PC-3 (cell line): ENCODE measurements at regions of chr10 and their contacts with region 1.

Region 1: DNA sequence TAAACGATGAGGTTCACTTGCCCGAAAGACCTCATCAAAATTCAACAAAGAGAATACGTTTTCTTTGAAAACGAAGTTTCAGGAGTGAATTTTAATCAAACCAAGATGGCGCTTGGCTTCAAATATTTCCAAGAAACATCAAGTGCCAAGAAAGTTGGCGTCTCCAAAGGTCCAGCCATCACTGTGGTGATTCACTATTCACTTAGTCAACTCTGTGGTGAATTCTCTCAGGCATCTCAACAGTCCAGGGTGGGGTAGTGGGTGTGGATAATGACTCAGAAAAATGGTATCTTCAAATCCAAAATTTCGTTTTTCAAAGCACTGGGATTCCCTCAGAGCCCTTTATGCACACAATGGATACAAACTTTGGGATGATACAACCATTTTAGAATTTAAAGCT is 133.1 kb downstream of the SVIL start:
- DNase-seq: peak; percentile 93
- ATAC-seq: peak; percentile 99
- H3K4me3 ChIP-seq: no peak overlapping the region
- H3K27ac ChIP-seq: peak overlapping the region; percentile 83
- H3K4me1 ChIP-seq: peaks cover 14% of the 10 kb centered on the region
- H3K27me3 ChIP-seq: no peaks in the 10 kb centered on the region
- CTCF ChIP-seq: no peak

Region 2: DNA sequence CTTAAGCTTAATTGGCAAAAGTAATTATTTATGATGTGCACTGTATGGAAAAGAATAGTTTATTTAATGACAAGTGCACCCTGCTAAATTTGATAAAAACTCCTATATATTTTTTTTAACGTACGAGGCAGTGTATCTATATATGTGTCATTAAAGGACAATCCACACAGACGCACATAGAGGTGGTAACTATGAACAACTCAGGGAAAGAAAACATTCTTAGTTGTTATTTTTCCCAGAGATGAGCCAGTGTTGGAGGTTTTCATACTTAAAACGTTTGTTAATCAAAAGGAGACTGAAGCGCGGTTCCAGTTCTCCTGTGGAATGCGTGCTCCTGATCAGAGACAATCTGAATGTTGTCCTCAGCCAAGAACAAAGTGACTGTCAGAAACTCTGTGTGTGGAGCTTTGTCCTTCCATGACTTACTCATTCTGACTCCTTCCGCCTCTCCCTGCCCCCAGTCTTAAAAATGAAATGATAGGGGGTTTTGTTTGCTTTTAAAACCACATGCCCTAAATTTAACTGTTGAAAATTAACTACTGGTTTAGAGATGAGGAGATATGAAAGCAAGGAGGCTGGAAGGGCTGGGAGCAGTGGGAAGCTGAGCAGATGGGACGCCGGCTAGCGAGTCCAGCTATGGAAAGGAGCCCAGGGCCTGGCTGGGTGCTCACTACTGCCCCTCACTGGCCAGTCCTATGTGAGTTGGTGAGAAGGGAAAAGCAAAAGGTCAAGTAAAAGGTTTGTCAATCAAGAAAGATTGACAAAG is 33.5 kb after region 1 on chr10:
- CTCF ChIA-PET with region 1: no interaction called
- POLR2A ChIA-PET with region 1: no interaction called
- intact Hi-C with region 1: loop called (anchors 1 kb)
- DNase-seq: peak; percentile 90
- ATAC-seq: peak; percentile 89
- H3K4me3 ChIP-seq: peak overlapping the region; percentile 43; the same call in 1 of the 2 replicates
- H3K27ac ChIP-seq: peak overlapping the region; percentile 96
- H3K4me1 ChIP-seq: peaks cover 43% of the 10 kb centered on the region
- H3K27me3 ChIP-seq: no peaks in the 10 kb centered on the region
- CTCF ChIP-seq: peak; percentile 90

Region 3: DNA sequence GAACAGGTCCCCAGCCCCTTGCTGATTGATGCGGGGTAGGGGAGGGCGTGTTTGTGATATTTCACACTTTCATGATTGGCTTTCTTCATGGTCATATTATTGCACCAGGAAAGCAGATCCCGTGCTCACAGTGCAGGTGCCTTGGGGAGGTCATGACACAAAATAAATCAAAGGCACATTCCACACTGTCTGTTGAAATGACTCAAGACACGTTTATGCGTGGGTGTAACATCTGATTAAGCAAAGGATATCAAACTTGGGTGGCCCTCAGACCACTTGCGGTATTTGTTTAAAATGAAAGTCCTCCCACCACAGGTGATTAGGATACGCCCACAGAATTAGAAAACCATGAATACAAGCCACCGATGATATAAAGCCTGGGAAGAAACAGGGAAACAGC is 82.0 kb after region 1 on chr10:
- CTCF ChIA-PET with region 1: no interaction called
- POLR2A ChIA-PET with region 1: no interaction called
- intact Hi-C with region 1: no loop called
- DNase-seq: peak; percentile 6
- ATAC-seq: no peak
- H3K4me3 ChIP-seq: no peak overlapping the region
- H3K27ac ChIP-seq: peak overlapping the region; percentile 78
- H3K4me1 ChIP-seq: peaks cover 15% of the 10 kb centered on the region
- H3K27me3 ChIP-seq: no peaks in the 10 kb centered on the region
- CTCF ChIP-seq: no peak